ENCODE measurements at regions of chr21 and their contacts with region 1.

Region 1: DNA sequence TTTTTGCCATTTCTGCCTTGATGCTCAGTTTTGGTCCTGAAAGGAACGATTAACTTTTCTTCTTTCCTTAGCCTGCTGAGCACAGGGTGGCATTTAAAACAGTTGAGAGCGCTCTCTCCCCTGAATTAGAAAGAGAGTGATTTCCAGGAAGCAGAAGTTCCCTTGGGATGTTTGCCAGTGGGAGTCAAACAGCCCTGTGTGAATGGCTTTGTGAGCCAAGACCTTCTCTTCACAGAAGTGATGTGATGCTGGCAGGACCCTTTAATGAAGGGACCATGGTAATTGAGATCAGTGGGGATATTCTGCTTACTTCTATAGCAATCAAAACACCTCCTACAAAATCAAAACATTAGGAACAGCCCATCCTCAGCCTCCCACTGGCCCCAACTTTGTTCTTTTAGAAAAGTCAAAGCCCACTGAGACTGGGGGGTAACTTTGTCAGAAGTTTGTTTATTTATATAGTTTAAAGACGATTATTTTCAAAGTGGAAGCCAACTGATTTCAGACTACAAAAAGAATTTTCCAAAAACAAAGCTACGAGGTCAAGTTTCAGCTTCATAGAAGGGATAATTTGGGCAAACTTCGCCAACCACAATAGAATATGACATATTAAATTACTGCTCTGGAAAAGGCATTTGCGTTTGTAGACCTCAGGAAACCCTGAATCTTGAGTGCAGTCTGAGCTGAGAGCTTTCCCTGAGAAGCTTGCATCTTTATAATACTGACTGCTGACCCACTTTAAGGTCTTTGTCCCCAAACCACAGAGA is 122.7 kb downstream of the GABPA start:
- DNase-seq: no peak
- ATAC-seq: no peak
- H3K4me3 ChIP-seq: no peak overlapping the region
- H3K27ac ChIP-seq: no peak overlapping the region
- H3K4me1 ChIP-seq: peaks cover 5% of the 10 kb centered on the region
- H3K27me3 ChIP-seq: peaks cover 7% of the 10 kb centered on the region; the same call in 1 of the 2 replicates
- CTCF ChIP-seq: no peak
- POLR2A ChIP-seq: no peak
- RAD21 ChIP-seq: no peak

Region 2: DNA sequence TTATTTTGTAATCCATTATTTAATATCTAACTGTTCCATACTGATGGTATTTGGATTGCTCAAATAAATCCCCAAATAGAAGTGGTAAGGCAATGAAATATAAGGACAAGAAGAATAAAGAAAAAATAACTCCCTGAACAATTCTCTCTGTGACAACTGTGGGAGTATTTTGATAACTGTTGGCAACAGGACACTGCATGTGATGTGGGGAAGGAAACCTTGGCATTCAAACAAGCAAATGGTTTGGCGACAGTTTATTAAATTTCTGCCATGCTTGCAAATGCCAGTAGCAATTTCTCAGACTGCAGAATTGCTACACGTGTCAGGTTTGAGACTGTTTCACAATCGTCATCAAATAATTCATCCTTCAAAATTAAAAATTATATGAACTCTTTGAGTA is 241.6 kb before region 1 on chr21:
- CTCF ChIA-PET with region 1: no interaction called
- POLR2A ChIA-PET with region 1: no interaction called
- dilution Hi-C with region 1: no loop called
- in situ Hi-C with region 1: no loop called
- intact Hi-C with region 1: loop called (anchors 5 kb)
- DNase-seq: no peak
- ATAC-seq: no peak
- H3K4me3 ChIP-seq: no peak overlapping the region
- H3K27ac ChIP-seq: no peak overlapping the region
- H3K4me1 ChIP-seq: no peaks in the 10 kb centered on the region
- H3K27me3 ChIP-seq: peaks cover 2% of the 10 kb centered on the region
- CTCF ChIP-seq: no peak
- POLR2A ChIP-seq: no peak
- RAD21 ChIP-seq: no peak

Measured in IMR-90 (cell line).